OCI-LY7 (cell line): ENCODE measurements at regions of chr1 and their contacts with region 1.

Region 1: DNA sequence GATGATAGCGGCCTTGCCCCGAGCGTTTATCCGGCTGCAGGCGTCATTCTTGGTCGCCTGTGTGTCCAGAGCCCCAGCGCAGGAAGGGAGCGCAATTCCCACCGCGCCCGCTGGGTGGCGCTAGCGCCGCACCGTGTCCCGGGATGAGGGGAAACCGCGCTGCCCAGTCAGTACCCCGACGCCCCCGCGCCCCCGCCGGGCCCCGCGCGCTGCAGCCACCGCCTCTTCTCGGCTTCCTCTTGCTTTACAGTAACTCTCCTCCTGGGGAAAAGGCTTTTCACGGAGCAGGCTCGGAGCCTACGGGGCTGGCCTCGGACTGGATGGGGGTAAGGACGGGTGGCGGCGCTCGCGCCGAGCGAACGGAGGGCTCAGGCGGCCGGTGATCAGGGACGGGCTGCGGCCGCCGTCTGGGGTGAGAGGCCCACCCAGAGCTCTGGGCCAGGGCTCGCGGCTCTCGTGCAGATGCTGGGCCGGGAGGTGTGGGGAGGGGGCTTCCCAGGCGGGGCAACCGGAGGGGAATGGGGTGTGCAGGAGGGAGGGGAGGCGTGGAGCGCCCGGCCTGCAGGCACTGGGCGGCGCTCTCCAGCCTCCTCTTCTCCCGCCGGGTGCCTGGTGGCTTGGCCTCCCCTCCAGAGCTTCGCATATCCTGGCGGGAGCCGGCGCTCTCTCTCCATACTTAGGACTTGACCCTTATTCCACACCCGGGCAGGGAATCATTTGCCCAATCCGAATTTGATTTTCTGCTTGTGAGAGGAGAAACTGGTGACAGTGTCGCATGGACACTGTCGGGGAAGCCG is 29.8 kb downstream of the TEX35 start:
- DNase-seq: peak; percentile 88
- H3K4me3 ChIP-seq: peak overlapping the region; percentile 75
- H3K27ac ChIP-seq: peak overlapping the region; percentile 84
- H3K4me1 ChIP-seq: peaks cover 31% of the 10 kb centered on the region
- CTCF ChIP-seq: peak; percentile 94

Region 2: GRCh38 chr1:177315270-177315669 is 1227.5 kb before region 1 on chr1:
- CTCF ChIA-PET with region 1: no interaction called
- POLR2A ChIA-PET with region 1: no interaction called
- intact Hi-C with region 1: no loop called
- DNase-seq: no peak
- H3K4me3 ChIP-seq: no peak overlapping the region
- H3K27ac ChIP-seq: no peak overlapping the region
- H3K4me1 ChIP-seq: no peaks in the 10 kb centered on the region
- CTCF ChIP-seq: no peak

Region 3: GRCh38 chr1:178581351-178582303 is 38.9 kb after region 1 on chr1:
- CTCF ChIA-PET with region 1: interaction called, 9 read pairs
- POLR2A ChIA-PET with region 1: interaction called, 127 read pairs
- intact Hi-C with region 1: loop called (anchors 1 kb)
- DNase-seq: peak; percentile 98
- H3K4me3 ChIP-seq: peak overlapping the region; percentile 67
- H3K27ac ChIP-seq: peak overlapping the region; percentile 99
- H3K4me1 ChIP-seq: peaks cover 87% of the 10 kb centered on the region
- CTCF ChIP-seq: peak; percentile 64

Region 4: GRCh38 chr1:178664278-178664677 is 121.5 kb after region 1 on chr1:
- CTCF ChIA-PET with region 1: no interaction called
- POLR2A ChIA-PET with region 1: interaction called, 4 read pairs
- intact Hi-C with region 1: loop called (anchors 1 kb)
- DNase-seq: peak; percentile 85
- H3K4me3 ChIP-seq: peak overlapping the region; percentile 15
- H3K27ac ChIP-seq: peak overlapping the region; percentile 75
- H3K4me1 ChIP-seq: peaks cover 68% of the 10 kb centered on the region
- CTCF ChIP-seq: no peak

Region 5: GRCh38 chr1:178749581-178750166 is 206.9 kb after region 1 on chr1:
- CTCF ChIA-PET with region 1: interaction called, 4 read pairs
- POLR2A ChIA-PET with region 1: interaction called, 10 read pairs
- intact Hi-C with region 1: loop called (anchors 1 kb)
- DNase-seq: no peak
- H3K4me3 ChIP-seq: peak overlapping the region; percentile 40
- H3K27ac ChIP-seq: peak overlapping the region; percentile 71
- H3K4me1 ChIP-seq: peaks cover 47% of the 10 kb centered on the region
- CTCF ChIP-seq: no peak

Region 6: DNA sequence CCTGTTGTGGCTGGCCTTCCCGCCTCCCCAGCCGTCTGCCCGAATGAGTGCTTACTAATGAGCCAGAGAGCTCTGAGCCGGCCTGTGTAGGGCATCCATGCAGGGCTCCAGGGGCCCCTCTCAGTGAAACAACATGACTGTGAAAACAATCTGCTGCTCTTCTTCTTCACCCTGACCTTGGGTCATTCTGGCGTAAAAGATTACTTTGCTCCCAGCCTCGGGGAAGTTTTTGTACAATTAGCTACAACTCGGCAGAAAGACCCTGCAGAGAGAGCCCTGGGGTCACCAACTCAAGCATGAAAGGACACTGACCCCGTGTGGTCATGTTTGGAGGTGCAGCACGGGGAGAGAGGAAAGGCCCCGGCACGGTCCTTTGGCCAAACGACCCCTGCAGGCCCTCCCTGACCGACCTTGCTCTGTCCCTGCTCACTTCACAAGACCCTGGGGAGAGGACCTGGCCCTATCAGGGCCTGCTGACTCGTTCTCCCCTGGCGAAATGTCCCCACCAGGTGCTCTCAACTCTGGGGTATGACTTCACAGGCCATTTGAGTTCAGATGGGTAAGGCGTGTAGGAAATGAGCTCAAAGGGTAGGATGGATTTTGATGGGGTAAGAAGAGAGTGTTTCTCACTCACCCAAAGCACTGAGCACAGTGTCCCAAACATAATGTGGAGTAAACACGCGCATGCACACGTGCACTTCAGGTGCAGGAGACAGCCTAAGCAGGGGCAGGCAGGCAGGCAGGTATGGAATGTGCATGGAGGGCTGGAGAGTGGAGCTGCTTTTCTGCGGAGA is 460.0 kb after region 1 on chr1:
- CTCF ChIA-PET with region 1: interaction called, 53 read pairs
- POLR2A ChIA-PET with region 1: interaction called, 18 read pairs
- intact Hi-C with region 1: loop called (anchors 1 kb)
- DNase-seq: peak; percentile 90
- H3K4me3 ChIP-seq: no peak overlapping the region
- H3K27ac ChIP-seq: peak overlapping the region; percentile 9
- H3K4me1 ChIP-seq: peaks cover 25% of the 10 kb centered on the region
- CTCF ChIP-seq: peak; percentile 97

Region 7: GRCh38 chr1:179081687-179082332 is 539.1 kb after region 1 on chr1 and contains the start of gene TOR3A:
- CTCF ChIA-PET with region 1: no interaction called
- POLR2A ChIA-PET with region 1: no interaction called
- intact Hi-C with region 1: loop called (anchors 5 kb)
- DNase-seq: peak; percentile 96
- H3K4me3 ChIP-seq: peak within 1 kb of the TSS; percentile 90
- H3K27ac ChIP-seq: peak within 1 kb of the TSS; percentile 91
- H3K4me1 ChIP-seq: peaks cover 37% of the 10 kb centered on the region
- CTCF ChIP-seq: no peak
- total RNA-seq, gene TOR3A: 32.9 and 49.0 TPM in 2 replicates